ENCODE measurements at regions of chr12 and their contacts with region 1.

Region 1: DNA sequence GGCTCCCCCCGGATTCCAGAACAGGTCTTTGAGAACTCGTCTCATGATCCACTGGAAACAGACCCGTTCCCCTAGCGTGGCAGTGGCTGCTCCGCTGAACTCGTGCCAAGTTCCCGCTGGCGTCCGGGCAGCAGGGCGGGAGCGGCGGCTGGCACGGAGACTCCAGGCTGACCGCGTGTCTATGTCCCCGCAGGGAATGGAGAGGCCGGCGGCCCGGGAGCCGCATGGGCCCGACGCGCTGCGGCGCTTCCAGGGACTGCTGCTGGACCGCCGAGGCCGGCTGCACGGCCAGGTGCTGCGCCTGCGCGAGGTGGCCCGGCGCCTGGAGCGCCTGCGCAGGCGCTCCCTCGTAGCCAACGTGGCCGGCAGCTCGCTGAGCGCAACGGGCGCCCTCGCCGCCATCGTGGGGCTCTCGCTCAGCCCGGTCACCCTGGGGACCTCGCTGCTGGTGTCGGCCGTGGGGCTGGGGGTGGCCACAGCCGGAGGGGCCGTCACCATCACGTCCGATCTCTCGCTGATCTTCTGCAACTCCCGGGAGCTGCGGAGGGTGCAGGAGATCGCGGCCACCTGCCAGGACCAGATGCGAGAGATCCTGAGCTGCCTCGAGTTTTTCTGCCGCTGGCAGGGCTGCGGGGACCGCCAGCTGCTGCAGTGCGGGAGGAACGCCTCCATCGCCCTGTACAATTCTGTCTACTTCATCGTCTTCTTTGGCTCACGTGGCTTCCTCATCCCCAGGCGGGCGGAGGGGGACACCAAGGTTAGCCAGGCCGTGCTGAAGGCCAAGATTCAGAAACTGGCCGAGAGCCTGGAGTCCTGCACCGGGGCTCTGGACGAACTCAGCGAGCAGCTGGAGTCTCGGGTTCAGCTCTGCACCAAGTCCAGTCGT is 1.5 kb downstream of the APOLD1 start:
- DNase-seq: peak; percentile 85
- ATAC-seq: peak; percentile 92
- H3K4me3 ChIP-seq: peak overlapping the region; percentile 54 to 88 (median 77)
- H3K4me3 Mint-ChIP-seq: peak overlapping the region; percentile 90
- H3K27ac ChIP-seq: peak overlapping the region; percentile 77 to 82
- H3K27ac Mint-ChIP-seq: peak overlapping the region; percentile 92
- H3K4me1 ChIP-seq: peaks cover 10 to 24% of the 10 kb centered on the region in 2 donors
- H3K4me1 Mint-ChIP-seq: peaks cover 20% of the 10 kb centered on the region
- H3K27me3 ChIP-seq: no peaks in the 10 kb centered on the region
- H3K27me3 Mint-ChIP-seq: no peaks in the 10 kb centered on the region
- CTCF ChIP-seq: peak; percentile 14

Region 2: GRCh38 chr12:12724661-12725545 is 62.1 kb before region 1 on chr12:
- CTCF ChIA-PET with region 1: no interaction called
- POLR2A ChIA-PET with region 1: no interaction called
- intact Hi-C with region 1: loop called (anchors 2 kb)
- DNase-seq: no peak
- ATAC-seq: peak; percentile 65
- H3K4me3 ChIP-seq: peak overlapping the region; percentile 74 to 88 (median 78)
- H3K4me3 Mint-ChIP-seq: peak overlapping the region; percentile 87
- H3K27ac ChIP-seq: peak overlapping the region; percentile 94 to 97
- H3K27ac Mint-ChIP-seq: peak overlapping the region; percentile 94
- H3K4me1 ChIP-seq: peaks cover 22 to 30% of the 10 kb centered on the region in 2 donors
- H3K4me1 Mint-ChIP-seq: peaks cover 52% of the 10 kb centered on the region
- H3K27me3 ChIP-seq: no peaks in the 10 kb centered on the region
- H3K27me3 Mint-ChIP-seq: no peaks in the 10 kb centered on the region
- CTCF ChIP-seq: peak; percentile 10

Region 3: DNA sequence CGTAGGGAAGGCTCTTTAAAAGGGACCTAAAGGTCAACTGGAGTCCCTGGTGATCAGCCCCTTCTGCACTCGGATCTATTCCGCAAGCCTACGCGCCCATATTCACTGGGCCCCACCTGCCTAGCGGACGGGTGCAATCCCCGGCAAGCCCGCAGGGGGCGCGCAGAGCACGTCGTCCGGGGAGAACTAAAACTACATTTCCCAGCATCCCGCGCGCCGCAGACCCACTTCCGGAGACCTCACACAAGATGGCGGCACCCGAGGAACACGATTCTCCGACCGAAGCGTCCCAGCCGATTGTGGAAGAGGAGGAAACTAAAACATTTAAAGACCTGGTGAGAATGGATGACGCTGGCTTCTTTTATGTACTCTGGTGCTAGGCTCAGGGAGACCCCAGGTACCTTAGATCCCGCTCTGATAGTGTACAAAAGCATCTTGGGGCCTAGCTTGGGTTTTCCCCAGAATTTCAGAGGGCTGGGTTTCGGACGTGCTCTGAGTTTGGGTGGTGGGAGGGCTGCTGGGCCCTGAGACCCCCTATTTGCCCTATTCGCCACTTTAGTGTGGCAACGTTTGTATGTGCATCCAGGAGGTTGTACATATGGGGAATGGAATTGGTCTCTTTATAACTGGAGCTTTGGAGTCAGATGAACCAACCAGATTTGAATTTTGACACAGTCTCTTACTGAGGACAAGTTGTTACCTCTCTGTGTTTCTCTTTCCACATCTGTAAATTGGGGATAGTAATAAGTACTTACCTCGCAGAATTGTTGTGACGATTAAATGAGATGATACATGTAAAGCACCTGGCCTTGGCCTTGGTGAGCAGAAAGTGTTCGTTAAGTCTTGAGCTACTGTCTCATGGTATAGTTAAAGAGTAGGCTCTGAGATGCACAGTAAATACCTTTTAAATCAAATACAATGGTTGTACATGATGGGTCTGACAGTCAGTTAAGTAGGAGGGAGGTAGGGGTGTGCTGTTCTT is 26.5 kb after region 1 on chr12 and contains the start of gene DDX47:
- CTCF ChIA-PET with region 1: interaction called, 189 read pairs
- POLR2A ChIA-PET with region 1: interaction called, 7 read pairs
- intact Hi-C with region 1: loop called (anchors 1 kb)
- DNase-seq: peak; percentile 96
- ATAC-seq: peak; percentile 75
- H3K4me3 ChIP-seq: peak within 1 kb of the TSS; percentile 81 to 100 (median 94)
- H3K4me3 Mint-ChIP-seq: peak within 1 kb of the TSS; percentile 91
- H3K27ac ChIP-seq: peak within 1 kb of the TSS; percentile 86 to 94
- H3K27ac Mint-ChIP-seq: peak within 1 kb of the TSS; percentile 91
- H3K4me1 ChIP-seq: peaks cover 24 to 41% of the 10 kb centered on the region in 2 donors
- H3K4me1 Mint-ChIP-seq: peaks cover 66% of the 10 kb centered on the region
- H3K27me3 ChIP-seq: no peaks in the 10 kb centered on the region
- H3K27me3 Mint-ChIP-seq: no peaks in the 10 kb centered on the region
- CTCF ChIP-seq: peak; percentile 92
- total RNA-seq, gene DDX47: 89.1 and 93.7 TPM in 2 replicates

Region 4: DNA sequence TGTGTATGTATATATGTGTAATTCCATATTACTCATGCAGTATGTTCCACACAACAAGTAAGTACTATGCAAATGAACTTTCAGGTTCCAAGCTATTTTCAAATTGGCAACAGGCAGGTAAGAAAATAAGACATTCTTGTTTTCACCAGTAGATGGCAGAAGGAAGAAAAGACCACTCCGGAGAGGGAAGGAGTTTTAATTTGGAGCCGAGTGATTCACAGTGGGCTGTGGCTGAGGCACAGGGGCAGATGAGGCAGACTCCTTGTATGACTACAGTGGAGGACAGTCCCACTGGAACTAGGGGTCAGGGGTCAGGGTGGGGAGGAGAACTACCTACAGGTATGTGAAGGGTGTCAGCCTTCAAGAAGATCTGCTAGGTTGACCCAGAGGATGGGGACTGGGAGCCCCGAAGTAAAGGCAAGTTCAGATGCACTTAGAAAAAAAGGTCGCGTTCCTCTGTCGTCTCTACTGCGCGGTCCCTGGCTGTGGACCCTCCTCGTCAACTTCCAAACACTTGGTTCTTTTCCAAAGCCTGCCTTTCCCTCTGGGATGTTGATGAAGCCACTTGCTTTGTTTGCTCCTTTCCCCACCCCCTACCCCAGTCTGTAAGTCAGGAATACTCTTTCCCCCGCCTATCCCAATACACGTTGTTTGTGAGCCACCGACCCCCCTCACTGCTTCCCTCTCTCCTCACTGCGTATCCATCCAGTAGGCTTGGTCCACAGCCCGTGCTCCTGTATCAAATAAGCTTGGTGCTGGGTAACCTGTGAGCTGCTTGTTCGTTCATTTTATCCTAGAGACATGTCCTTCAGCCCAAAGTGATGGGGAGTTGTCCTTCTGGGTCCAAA is 50.3 kb after region 1 on chr12:
- CTCF ChIA-PET with region 1: interaction called, 28 read pairs
- POLR2A ChIA-PET with region 1: interaction called, 9 read pairs
- intact Hi-C with region 1: loop called (anchors 1 kb)
- DNase-seq: peak; percentile 55
- ATAC-seq: peak; percentile 56
- H3K4me3 ChIP-seq: no peak overlapping the region
- H3K4me3 Mint-ChIP-seq: no peak overlapping the region
- H3K27ac ChIP-seq: no peak overlapping the region
- H3K27ac Mint-ChIP-seq: no peak overlapping the region
- H3K4me1 ChIP-seq: peaks cover 0 to 4% of the 10 kb centered on the region in 2 donors
- H3K4me1 Mint-ChIP-seq: peaks cover 5% of the 10 kb centered on the region
- H3K27me3 ChIP-seq: no peaks in the 10 kb centered on the region
- H3K27me3 Mint-ChIP-seq: no peaks in the 10 kb centered on the region
- CTCF ChIP-seq: peak; percentile 68

Region 5: DNA sequence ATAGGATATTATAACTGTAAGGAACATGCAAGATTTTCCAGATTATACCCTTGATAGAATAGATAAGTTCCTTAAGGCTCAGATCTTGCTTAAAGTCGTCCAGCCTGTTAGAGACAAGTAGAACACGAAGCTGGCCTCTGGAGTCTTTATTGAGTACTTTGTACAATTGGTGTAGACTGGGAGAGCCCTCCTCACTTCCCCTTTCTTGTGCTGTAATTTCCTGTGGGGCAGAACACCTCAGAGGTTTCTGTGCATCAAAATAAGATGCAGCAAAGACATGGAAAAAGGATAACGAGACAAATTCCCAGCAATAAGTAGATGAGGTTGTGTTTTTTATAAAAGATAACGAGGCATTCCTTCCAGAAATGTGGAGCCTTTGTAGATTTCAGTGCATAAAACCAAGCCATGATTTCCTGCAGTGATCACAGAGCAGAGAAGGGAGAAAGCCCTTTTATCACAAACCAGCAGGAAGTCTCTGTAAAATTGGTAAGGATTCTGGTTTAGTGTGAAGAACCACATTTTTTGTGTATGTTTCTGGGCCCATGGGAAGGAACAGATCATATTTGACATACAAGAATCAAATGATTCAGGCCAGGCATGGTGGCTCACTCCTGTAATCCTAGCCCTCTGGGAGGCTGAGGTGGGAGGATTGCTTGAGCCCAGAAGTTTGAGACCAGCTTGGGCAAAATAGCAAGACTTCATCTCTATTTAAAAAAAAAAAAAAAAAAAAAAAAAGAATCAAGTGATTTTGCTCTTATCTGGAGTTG is 122.5 kb after region 1 on chr12:
- CTCF ChIA-PET with region 1: interaction called, 13 read pairs
- POLR2A ChIA-PET with region 1: no interaction called
- intact Hi-C with region 1: no loop called
- DNase-seq: peak; percentile 52
- ATAC-seq: peak; percentile 62
- H3K4me3 ChIP-seq: no peak overlapping the region
- H3K4me3 Mint-ChIP-seq: peak overlapping the region; percentile 9
- H3K27ac ChIP-seq: no peak overlapping the region
- H3K27ac Mint-ChIP-seq: peak overlapping the region; percentile 18
- H3K4me1 ChIP-seq: peaks cover 17 to 20% of the 10 kb centered on the region in 2 donors
- H3K4me1 Mint-ChIP-seq: peaks cover 18% of the 10 kb centered on the region
- H3K27me3 ChIP-seq: no peaks in the 10 kb centered on the region
- H3K27me3 Mint-ChIP-seq: no peaks in the 10 kb centered on the region
- CTCF ChIP-seq: no peak

Region 6: DNA sequence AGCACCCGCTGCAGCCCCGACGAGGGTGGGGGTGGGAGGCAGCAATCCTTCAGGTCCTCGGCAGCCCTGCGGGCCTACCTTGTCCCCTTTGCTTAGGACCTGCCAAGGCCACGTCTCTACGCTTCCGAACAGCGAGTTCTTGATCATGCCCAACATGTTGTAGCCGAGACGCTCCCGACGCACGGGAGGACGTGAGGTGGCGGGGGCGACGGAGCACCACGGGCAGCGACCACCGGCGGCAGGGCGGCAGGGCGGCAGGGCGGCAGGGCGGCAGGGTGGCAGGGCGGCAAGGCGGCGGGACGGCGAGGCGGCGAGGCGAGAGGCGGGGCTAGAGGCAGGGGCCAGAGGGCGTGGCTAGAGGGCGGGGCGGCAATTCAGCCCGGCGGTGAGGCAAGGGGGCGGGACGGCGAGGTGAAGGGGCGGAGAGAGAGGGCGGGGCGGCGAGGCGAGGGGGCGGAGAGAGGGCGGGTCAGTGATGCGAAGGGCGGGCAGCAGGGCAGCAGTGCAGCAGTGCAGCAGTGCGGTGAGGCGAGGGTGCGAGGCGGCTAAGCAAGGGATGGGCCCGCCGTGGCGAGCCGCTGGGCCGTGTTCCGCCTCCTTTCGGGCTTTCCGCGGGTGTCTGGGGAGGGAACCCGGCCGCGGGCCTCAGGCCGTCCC is 213.1 kb after region 1 on chr12 and contains the start of gene HEBP1:
- CTCF ChIA-PET with region 1: interaction called, 3 read pairs
- POLR2A ChIA-PET with region 1: no interaction called
- intact Hi-C with region 1: loop called (anchors 2 kb)
- DNase-seq: peak; percentile 96
- ATAC-seq: peak; percentile 89
- H3K4me3 ChIP-seq: peak within 1 kb of the TSS; percentile 63 to 92 (median 81)
- H3K4me3 Mint-ChIP-seq: peak within 1 kb of the TSS; percentile 90
- H3K27ac ChIP-seq: peak within 1 kb of the TSS; percentile 61 to 63
- H3K27ac Mint-ChIP-seq: peak within 1 kb of the TSS; percentile 80
- H3K4me1 ChIP-seq: peaks cover 11 to 20% of the 10 kb centered on the region in 2 donors
- H3K4me1 Mint-ChIP-seq: peaks cover 29% of the 10 kb centered on the region
- H3K27me3 ChIP-seq: peaks cover 0 to 3% (median 0%) of the 10 kb centered on the region in 4 experiments
- H3K27me3 Mint-ChIP-seq: no peaks in the 10 kb centered on the region
- CTCF ChIP-seq: no peak
- total RNA-seq, gene HEBP1: 11.2 and 14.5 TPM in 2 replicates

Measured in B cell (primary cell).